CD8-positive, alpha-beta memory T cell (primary cell): ENCODE measurements at regions of chr2 and their contacts with region 1.

Region 1: GRCh38 chr2:219206442-219207253 is at the start of gene ZFAND2B:
- DNase-seq: peak; percentile 95 to 98 (median 96)
- H3K4me3 ChIP-seq: peak within 1 kb of the TSS; percentile 81
- H3K4me3 Mint-ChIP-seq: peak within 1 kb of the TSS; percentile 88 to 97 (median 94)
- H3K27ac ChIP-seq: peak within 1 kb of the TSS; percentile 85
- H3K27ac Mint-ChIP-seq: peak within 1 kb of the TSS; percentile 95 to 99 (median 96)
- H3K4me1 ChIP-seq: peaks cover 29% of the 10 kb centered on the region
- H3K4me1 Mint-ChIP-seq: peaks cover 32 to 53% (median 49%) of the 10 kb centered on the region in 3 donors
- H3K27me3 ChIP-seq: no peaks in the 10 kb centered on the region
- H3K27me3 Mint-ChIP-seq: no peaks in the 10 kb centered on the region
- total RNA-seq, gene ZFAND2B: 32.4 to 36.8 TPM

Region 2: GRCh38 chr2:219177552-219178376 is 28.9 kb before region 1 on chr2 and contains the start of gene RETREG2:
- CTCF ChIA-PET with region 1: interaction called, 110 read pairs
- POLR2A ChIA-PET with region 1: interaction called, 88 read pairs
- DNase-seq: peak; percentile 73 to 90 (median 85)
- H3K4me3 ChIP-seq: peak within 1 kb of the TSS; percentile 64
- H3K4me3 Mint-ChIP-seq: peak within 1 kb of the TSS; percentile 94 to 98 (median 96)
- H3K27ac ChIP-seq: peak within 1 kb of the TSS; percentile 85
- H3K27ac Mint-ChIP-seq: peak within 1 kb of the TSS; percentile 95 to 100 (median 99)
- H3K4me1 ChIP-seq: peaks cover 54% of the 10 kb centered on the region
- H3K4me1 Mint-ChIP-seq: peaks cover 55 to 79% (median 75%) of the 10 kb centered on the region in 3 donors
- H3K27me3 ChIP-seq: no peaks in the 10 kb centered on the region
- H3K27me3 Mint-ChIP-seq: no peaks in the 10 kb centered on the region
- total RNA-seq, gene RETREG2: 67.6 to 76.1 TPM

Region 3: DNA sequence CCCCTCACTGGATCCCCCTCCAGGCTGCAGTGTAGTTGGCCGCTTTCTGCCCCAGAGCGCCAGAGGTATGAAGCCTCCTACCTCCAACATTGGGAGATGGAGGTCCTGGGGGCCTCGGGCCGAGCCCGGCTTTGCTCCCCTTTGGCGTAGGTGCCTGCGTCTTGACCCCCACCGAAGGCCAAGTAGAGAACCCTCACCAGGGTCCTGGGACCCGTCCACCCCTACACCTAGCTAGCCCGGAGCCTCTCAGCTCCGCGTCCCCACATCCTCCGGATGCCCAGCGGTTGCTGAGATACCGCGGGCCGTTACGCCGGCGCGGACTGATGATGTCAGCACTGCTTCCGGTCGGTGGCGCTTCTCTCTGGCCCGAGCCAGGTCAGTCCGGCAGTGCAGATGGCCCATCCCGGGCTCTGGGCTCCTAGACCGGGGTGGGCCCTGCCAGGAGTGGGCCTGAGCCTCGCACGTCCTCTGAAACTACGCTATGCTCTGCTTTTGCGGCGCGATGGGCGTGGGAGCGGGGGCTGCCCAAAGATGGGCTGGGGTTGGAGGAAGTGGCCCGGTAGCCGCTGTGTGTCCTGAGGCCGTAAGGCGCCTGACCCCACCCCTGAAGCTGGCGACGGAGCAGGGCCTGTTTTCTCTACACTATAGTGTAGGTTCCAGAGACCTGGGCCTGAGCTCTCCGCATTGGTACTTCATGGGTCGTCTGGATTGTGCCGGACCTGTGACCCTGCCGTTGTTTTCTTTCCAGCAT is 38.7 kb after region 1 on chr2 and contains the starts of genes GLB1L and STK16:
- CTCF ChIA-PET with region 1: interaction called, 18 read pairs
- POLR2A ChIA-PET with region 1: interaction called, 9 read pairs
- DNase-seq: peak; percentile 79 to 93 (median 83)
- H3K4me3 ChIP-seq: peak within 1 kb of the TSS; percentile 86
- H3K4me3 Mint-ChIP-seq: peak within 1 kb of the TSS; percentile 84 to 99 (median 91)
- H3K27ac ChIP-seq: peak within 1 kb of the TSS; percentile 93
- H3K27ac Mint-ChIP-seq: peak within 1 kb of the TSS; percentile 91 to 98 (median 98)
- H3K4me1 ChIP-seq: peaks cover 56% of the 10 kb centered on the region
- H3K4me1 Mint-ChIP-seq: peaks cover 54 to 66% (median 55%) of the 10 kb centered on the region in 3 donors
- H3K27me3 ChIP-seq: no peaks in the 10 kb centered on the region
- H3K27me3 Mint-ChIP-seq: peaks cover 0 to 6% of the 10 kb centered on the region in 2 donors
- total RNA-seq, gene GLB1L: 2.6 to 3.5 TPM
- total RNA-seq, gene STK16: 23.0 to 26.1 TPM

Region 4: GRCh38 chr2:219253753-219254590 is 47.3 kb after region 1 on chr2 and contains the start of gene TUBA4A:
- CTCF ChIA-PET with region 1: interaction called, 18 read pairs
- POLR2A ChIA-PET with region 1: interaction called, 16 read pairs
- DNase-seq: peak; percentile 88 to 95 (median 90)
- H3K4me3 ChIP-seq: peak within 1 kb of the TSS; percentile 99
- H3K4me3 Mint-ChIP-seq: peak within 1 kb of the TSS; percentile 84 to 99 (median 89)
- H3K27ac ChIP-seq: peak within 1 kb of the TSS; percentile 95
- H3K27ac Mint-ChIP-seq: peak within 1 kb of the TSS; percentile 91 to 100 (median 96)
- H3K4me1 ChIP-seq: peaks cover 37% of the 10 kb centered on the region
- H3K4me1 Mint-ChIP-seq: peaks cover 45 to 50% (median 45%) of the 10 kb centered on the region in 3 donors
- H3K27me3 ChIP-seq: no peaks in the 10 kb centered on the region
- H3K27me3 Mint-ChIP-seq: no peaks in the 10 kb centered on the region
- total RNA-seq, gene TUBA4A: 175 to 178 TPM

Region 5: GRCh38 chr2:219484343-219485200 is 277.9 kb after region 1 on chr2:
- CTCF ChIA-PET with region 1: no interaction called
- POLR2A ChIA-PET with region 1: no interaction called
- DNase-seq: peak in 1 of 5 donors; percentile 11
- H3K4me3 ChIP-seq: no peak overlapping the region
- H3K4me3 Mint-ChIP-seq: peak overlapping the region; percentile 24 to 86 (median 67)
- H3K27ac ChIP-seq: no peak overlapping the region
- H3K27ac Mint-ChIP-seq: no peak overlapping the region
- H3K4me1 ChIP-seq: no peaks in the 10 kb centered on the region
- H3K4me1 Mint-ChIP-seq: peaks cover 0 to 16% (median 2%) of the 10 kb centered on the region in 3 donors
- H3K27me3 ChIP-seq: peaks cover 22% of the 10 kb centered on the region
- H3K27me3 Mint-ChIP-seq: peaks cover 29 to 63% of the 10 kb centered on the region in 2 donors